ENCODE measurements at regions of chr1 and their contacts with region 1.

Region 1: GRCh38 chr1:115980998-115981993 is 5.0 kb downstream of the SLC22A15 start:
- DNase-seq: peak; percentile 42
- ATAC-seq: peak; percentile 68
- H3K4me3 ChIP-seq: no peak overlapping the region
- H3K27ac ChIP-seq: no peak overlapping the region
- H3K4me1 ChIP-seq: peaks cover 8 to 18% of the 10 kb centered on the region in 2 experiments; a peak in 3 of 4 replicates
- H3K27me3 ChIP-seq: no peaks in the 10 kb centered on the region
- CTCF ChIP-seq: peak; percentile 74 to 92 (median 76); a peak in 5 of 6 replicates
- POLR2A ChIP-seq: no peak
- RAD21 ChIP-seq: peak; percentile 88

Region 2: DNA sequence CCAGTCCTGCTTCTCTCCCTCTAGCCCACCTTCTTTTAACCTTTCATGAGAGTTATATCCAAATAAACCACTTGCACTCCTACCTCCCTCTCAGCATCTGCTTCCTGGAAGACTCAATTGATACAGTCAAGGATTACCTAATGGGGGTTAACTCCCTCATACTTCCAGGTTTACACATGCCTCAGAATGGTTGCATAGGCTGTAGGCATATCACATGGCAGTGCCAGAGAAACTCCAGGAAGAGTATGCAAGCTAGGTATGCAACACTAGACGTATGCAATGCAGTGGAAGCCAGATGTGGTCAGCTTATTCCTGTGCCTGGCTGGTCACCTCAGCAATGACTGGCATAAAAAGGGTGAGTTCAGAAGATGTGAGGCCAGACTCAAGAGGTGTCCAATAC is 372.3 kb before region 1 on chr1:
- CTCF ChIA-PET with region 1: interaction called, 4 read pairs
- POLR2A ChIA-PET with region 1: no interaction called
- RAD21 ChIA-PET with region 1: interaction called in 1 of 2 experiments, 3 read pairs
- intact Hi-C with region 1: loop called (anchors 5 kb)
- DNase-seq: no peak
- ATAC-seq: no peak
- H3K4me3 ChIP-seq: no peak overlapping the region
- H3K27ac ChIP-seq: no peak overlapping the region
- H3K4me1 ChIP-seq: no peaks in the 10 kb centered on the region; a peak in 1 of 4 replicates
- H3K27me3 ChIP-seq: no peaks in the 10 kb centered on the region
- CTCF ChIP-seq: no peak
- POLR2A ChIP-seq: no peak
- RAD21 ChIP-seq: no peak

Region 3: GRCh38 chr1:115717541-115717940 is 263.8 kb before region 1 on chr1:
- CTCF ChIA-PET with region 1: interaction called, 8 read pairs
- POLR2A ChIA-PET with region 1: no interaction called
- RAD21 ChIA-PET with region 1: no interaction called
- intact Hi-C with region 1: loop called (anchors 5 kb)
- DNase-seq: peak; percentile 32
- ATAC-seq: peak; percentile 68
- H3K4me3 ChIP-seq: no peak overlapping the region
- H3K27ac ChIP-seq: no peak overlapping the region
- H3K4me1 ChIP-seq: peaks cover 7 to 15% of the 10 kb centered on the region in 2 experiments; a peak in 2 of 4 replicates
- H3K27me3 ChIP-seq: no peaks in the 10 kb centered on the region
- CTCF ChIP-seq: peak; percentile 31 to 58 (median 48); a peak in 4 of 6 replicates
- POLR2A ChIP-seq: no peak
- RAD21 ChIP-seq: peak; percentile 66

Region 4: GRCh38 chr1:115782571-115783281 is 198.6 kb before region 1 on chr1:
- CTCF ChIA-PET with region 1: interaction called, 16 read pairs
- POLR2A ChIA-PET with region 1: no interaction called
- RAD21 ChIA-PET with region 1: no interaction called
- intact Hi-C with region 1: no loop called
- DNase-seq: peak; percentile 51
- ATAC-seq: peak; percentile 92
- H3K4me3 ChIP-seq: peak overlapping the region in 1 of 2 experiments; percentile 31; a peak in 1 of 4 replicates
- H3K27ac ChIP-seq: no peak overlapping the region
- H3K4me1 ChIP-seq: peaks cover 8 to 19% of the 10 kb centered on the region in 2 experiments; a peak in 3 of 4 replicates
- H3K27me3 ChIP-seq: no peaks in the 10 kb centered on the region
- CTCF ChIP-seq: no peak
- POLR2A ChIP-seq: no peak
- RAD21 ChIP-seq: no peak

Region 5: DNA sequence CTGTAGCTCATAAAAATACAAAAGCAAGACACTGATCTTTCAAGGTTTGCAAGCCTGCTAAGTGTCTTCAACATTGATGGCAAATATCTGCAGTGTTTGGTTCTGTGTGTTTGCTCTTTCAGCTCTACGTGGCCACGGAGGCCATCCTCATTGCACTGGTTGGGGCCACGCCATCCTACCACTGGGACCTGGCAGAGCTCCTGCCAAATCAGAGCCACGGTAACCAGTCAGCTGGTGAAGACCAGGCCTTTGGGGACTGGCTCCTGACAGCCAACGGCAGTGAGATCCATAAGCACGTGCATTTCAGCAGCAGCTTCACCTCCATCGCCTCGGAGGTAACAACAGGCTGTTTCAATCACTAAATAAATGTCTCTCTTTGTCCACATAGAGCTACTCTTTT is 10.6 kb after region 1 on chr1:
- CTCF ChIA-PET with region 1: interaction called, 26 read pairs
- POLR2A ChIA-PET with region 1: no interaction called
- RAD21 ChIA-PET with region 1: no interaction called
- intact Hi-C with region 1: no loop called
- DNase-seq: no peak
- ATAC-seq: no peak
- H3K4me3 ChIP-seq: no peak overlapping the region
- H3K27ac ChIP-seq: no peak overlapping the region
- H3K4me1 ChIP-seq: no peaks in the 10 kb centered on the region
- H3K27me3 ChIP-seq: no peaks in the 10 kb centered on the region
- CTCF ChIP-seq: no peak
- POLR2A ChIP-seq: no peak
- RAD21 ChIP-seq: no peak